Caco-2 (cell line): ENCODE measurements at regions of chr2 and their contacts with region 1.

Region 1: DNA sequence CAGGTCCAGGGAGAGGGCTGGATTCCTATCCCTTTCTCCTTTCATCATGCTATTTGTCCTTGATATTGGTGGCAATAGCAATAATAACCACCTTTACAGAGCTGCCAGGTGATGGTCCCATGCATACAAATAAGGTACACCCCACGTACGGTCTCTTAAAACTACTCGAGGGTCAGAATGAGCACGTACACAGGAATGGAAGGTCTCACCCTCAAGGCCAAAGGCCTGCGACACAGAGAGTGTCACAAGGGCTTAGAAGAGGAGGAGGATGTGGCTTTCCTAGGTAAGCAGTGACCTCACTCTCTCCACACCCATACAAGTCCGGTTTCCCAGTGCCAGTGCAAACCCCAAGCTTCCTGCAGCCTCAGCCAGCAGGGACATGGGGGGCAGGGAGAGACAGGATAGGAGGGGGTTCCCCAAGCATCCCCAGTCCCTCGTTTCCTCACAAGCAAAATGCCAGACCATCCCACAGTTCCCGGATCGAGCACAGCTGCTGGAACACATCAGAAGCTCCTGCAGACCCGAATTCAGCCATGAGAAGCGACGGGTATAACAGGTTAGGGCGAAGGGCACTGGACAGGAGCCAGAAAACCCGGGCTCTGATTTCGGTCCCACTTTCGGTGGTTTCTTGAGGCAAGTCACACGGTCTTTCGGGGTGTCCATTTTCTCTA is 49.2 kb downstream of the PLB1 start:
- DNase-seq: peak; percentile 73 to 85
- H3K4me3 ChIP-seq: peak overlapping the region; percentile 3
- H3K4me3 Mint-ChIP-seq: peak overlapping the region; percentile 86
- H3K27ac Mint-ChIP-seq: peak overlapping the region; percentile 90
- H3K4me1 ChIP-seq: peaks cover 49% of the 10 kb centered on the region
- H3K4me1 Mint-ChIP-seq: peaks cover 43% of the 10 kb centered on the region
- H3K27me3 ChIP-seq: no peaks in the 10 kb centered on the region
- H3K27me3 Mint-ChIP-seq: no peaks in the 10 kb centered on the region
- CTCF ChIP-seq: no peak

Region 2: DNA sequence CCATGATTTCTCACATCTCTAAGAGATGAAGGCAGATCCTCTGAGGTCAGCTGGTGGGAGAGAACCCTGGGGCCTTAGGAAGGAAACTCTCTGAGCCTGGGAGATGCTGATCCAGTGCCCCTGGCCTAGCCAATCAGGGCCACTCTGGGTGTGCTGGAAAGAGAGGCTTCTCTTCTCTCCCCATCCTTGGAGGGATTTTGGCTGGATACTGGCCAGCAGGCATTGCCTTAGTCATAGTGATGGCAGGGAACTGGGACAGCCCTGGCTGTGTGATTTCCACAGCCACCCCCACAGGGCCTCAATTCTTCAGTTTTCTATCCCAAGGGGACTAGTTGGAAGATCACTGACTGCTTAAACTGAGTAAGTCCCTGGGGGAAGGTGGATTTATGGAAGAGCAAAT is 75.8 kb before region 1 on chr2:
- CTCF ChIA-PET with region 1: no interaction called
- POLR2A ChIA-PET with region 1: no interaction called
- intact Hi-C with region 1: loop called (anchors 10 kb)
- DNase-seq: no peak
- H3K4me3 ChIP-seq: no peak overlapping the region
- H3K4me3 Mint-ChIP-seq: no peak overlapping the region
- H3K27ac Mint-ChIP-seq: no peak overlapping the region
- H3K4me1 ChIP-seq: peaks cover 27% of the 10 kb centered on the region
- H3K4me1 Mint-ChIP-seq: peaks cover 23% of the 10 kb centered on the region
- H3K27me3 ChIP-seq: no peaks in the 10 kb centered on the region
- H3K27me3 Mint-ChIP-seq: no peaks in the 10 kb centered on the region
- CTCF ChIP-seq: no peak

Region 3: GRCh38 chr2:28507806-28508764 is 37.0 kb before region 1 on chr2:
- CTCF ChIA-PET with region 1: no interaction called
- POLR2A ChIA-PET with region 1: no interaction called
- intact Hi-C with region 1: loop called (anchors 1 kb)
- DNase-seq: peak; percentile 84 to 95
- H3K4me3 ChIP-seq: no peak overlapping the region
- H3K4me3 Mint-ChIP-seq: peak overlapping the region; percentile 1
- H3K27ac Mint-ChIP-seq: peak overlapping the region; percentile 72
- H3K4me1 ChIP-seq: peaks cover 30% of the 10 kb centered on the region
- H3K4me1 Mint-ChIP-seq: peaks cover 14% of the 10 kb centered on the region
- H3K27me3 ChIP-seq: no peaks in the 10 kb centered on the region
- H3K27me3 Mint-ChIP-seq: no peaks in the 10 kb centered on the region
- CTCF ChIP-seq: no peak

Region 4: DNA sequence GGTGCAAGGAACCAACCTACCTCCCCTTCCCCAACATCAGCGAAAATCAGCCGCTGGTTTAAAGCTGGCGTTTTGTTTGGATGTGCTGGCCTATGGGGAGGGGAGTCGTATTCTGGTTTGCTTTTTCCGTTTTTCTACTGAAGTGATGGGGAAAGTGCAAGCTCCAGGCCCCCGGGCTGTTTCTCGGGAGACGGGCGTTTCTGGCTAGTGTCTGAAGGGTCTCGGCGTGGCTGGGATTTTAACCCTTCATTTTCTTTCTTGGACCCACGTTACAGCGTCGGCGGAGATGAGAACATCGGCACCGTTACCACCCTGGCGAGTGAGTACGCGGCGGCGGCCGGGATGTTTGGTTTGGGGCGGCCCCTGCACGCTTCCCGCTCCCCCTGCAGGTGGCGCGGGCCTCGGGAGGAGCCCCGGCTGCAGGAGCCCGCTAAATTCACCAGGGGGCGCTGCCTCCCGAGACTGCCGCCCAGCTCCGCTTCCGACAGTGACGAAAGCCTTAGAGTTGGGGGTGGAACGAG is 21.5 kb after region 1 on chr2:
- CTCF ChIA-PET with region 1: interaction called, 14 read pairs
- POLR2A ChIA-PET with region 1: no interaction called
- intact Hi-C with region 1: no loop called
- DNase-seq: peak; percentile 80 to 93
- H3K4me3 ChIP-seq: peak overlapping the region; percentile 31
- H3K4me3 Mint-ChIP-seq: peak overlapping the region; percentile 76
- H3K27ac Mint-ChIP-seq: peak overlapping the region; percentile 62
- H3K4me1 ChIP-seq: peaks cover 22% of the 10 kb centered on the region
- H3K4me1 Mint-ChIP-seq: peaks cover 11% of the 10 kb centered on the region
- H3K27me3 ChIP-seq: no peaks in the 10 kb centered on the region
- H3K27me3 Mint-ChIP-seq: no peaks in the 10 kb centered on the region
- CTCF ChIP-seq: peak; percentile 99 to 100